ENCODE measurements at regions of chr6 and their contacts with region 1.

Region 1: GRCh38 chr6:29737707-29738630 is 14.7 kb downstream of the HLA-F start:
- DNase-seq: peak; percentile 41 to 74 (median 65)
- ATAC-seq: peak; percentile 94
- H3K4me3 ChIP-seq: no peak overlapping the region
- H3K4me3 Mint-ChIP-seq: no peak overlapping the region
- H3K27ac ChIP-seq: no peak overlapping the region
- H3K27ac Mint-ChIP-seq: peak overlapping the region in 1 of 9 donors; percentile 48
- H3K4me1 ChIP-seq: no peaks in the 10 kb centered on the region
- H3K4me1 Mint-ChIP-seq: peaks cover 11 to 29% (median 15%) of the 10 kb centered on the region in 7 donors
- H3K27me3 ChIP-seq: no peaks in the 10 kb centered on the region
- H3K27me3 Mint-ChIP-seq: no peaks in the 10 kb centered on the region

Region 2: GRCh38 chr6:29705389-29706231 is 32.4 kb before region 1 on chr6:
- CTCF ChIA-PET with region 1: interaction called, 13 read pairs
- POLR2A ChIA-PET with region 1: interaction called, 33 read pairs
- intact Hi-C with region 1: loop called (anchors 1 to 5 kb)
- DNase-seq: peak in 4 of 9 donors; percentile 41 to 60 (median 43)
- ATAC-seq: no peak
- H3K4me3 ChIP-seq: no peak overlapping the region
- H3K4me3 Mint-ChIP-seq: peak overlapping the region in 6 of 10 donors; percentile 20 to 77 (median 42)
- H3K27ac ChIP-seq: peak overlapping the region; percentile 2
- H3K27ac Mint-ChIP-seq: peak overlapping the region in 8 of 9 donors; percentile 16 to 95 (median 82)
- H3K4me1 ChIP-seq: peaks cover 47 to 54% of the 10 kb centered on the region in 2 donors
- H3K4me1 Mint-ChIP-seq: peaks cover 21 to 59% (median 51%) of the 10 kb centered on the region in 7 donors
- H3K27me3 ChIP-seq: no peaks in the 10 kb centered on the region
- H3K27me3 Mint-ChIP-seq: peaks cover 4 to 37% (median 8%) of the 10 kb centered on the region in 5 donors

Region 3: GRCh38 chr6:29723262-29723665 is 14.7 kb before region 1 on chr6 and contains the start of gene HLA-F:
- CTCF ChIA-PET with region 1: interaction called, 12 read pairs
- POLR2A ChIA-PET with region 1: interaction called, 9 read pairs
- intact Hi-C with region 1: no loop called
- DNase-seq: peak; percentile 56 to 87 (median 79)
- ATAC-seq: peak; percentile 91
- H3K4me3 ChIP-seq: peak within 1 kb of the TSS; percentile 98
- H3K4me3 Mint-ChIP-seq: peak within 1 kb of the TSS; percentile 82 to 97 (median 95)
- H3K27ac ChIP-seq: peak within 1 kb of the TSS; percentile 100
- H3K27ac Mint-ChIP-seq: peak within 1 kb of the TSS; percentile 92 to 98 (median 95)
- H3K4me1 ChIP-seq: peaks cover 47 to 48% of the 10 kb centered on the region in 2 donors
- H3K4me1 Mint-ChIP-seq: peaks cover 32 to 63% (median 50%) of the 10 kb centered on the region in 7 donors
- H3K27me3 ChIP-seq: no peaks in the 10 kb centered on the region
- H3K27me3 Mint-ChIP-seq: no peaks in the 10 kb centered on the region
- total RNA-seq, gene HLA-F: 502 to 678 (median 522) TPM

Region 4: DNA sequence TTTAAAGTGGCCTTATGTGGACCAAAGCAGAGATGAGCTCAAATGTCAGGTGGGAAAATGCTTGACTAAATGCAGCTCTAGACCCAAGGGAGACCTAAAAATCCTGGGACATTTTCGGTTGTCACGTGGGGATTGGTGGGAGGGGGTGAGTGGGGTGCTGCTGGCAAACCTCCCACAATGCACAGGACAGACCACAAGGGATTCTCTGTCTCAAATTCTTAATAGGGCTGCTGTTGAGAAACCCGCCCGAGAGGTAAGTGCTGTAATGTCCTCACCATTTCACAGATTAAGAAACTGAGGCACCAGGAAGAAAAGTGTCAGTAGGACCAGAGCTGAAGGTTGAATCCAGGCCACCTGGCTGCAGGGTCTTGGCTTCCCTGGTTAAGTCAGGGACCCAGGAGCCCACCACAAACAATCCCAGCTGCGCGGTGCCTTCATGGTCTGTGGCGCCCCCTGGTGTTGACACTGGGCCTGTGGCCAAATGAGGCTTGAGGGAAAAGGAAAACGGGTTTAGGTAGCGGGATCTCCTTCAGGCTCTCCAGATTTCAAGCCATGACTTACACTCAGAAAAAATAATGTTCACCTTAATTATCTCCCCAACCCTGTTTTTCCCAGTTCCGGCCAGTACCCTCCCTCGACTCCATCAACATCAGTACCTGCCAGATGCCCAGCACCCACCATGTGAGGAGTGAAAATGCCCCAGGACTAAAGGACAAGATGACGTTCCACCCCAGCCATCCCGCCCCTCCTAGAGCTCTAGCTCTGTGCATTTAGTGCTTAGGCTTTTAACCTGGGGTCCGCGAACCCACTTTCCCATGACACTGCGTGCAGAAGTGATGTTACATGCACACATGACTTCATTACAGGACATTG is 96.8 kb after region 1 on chr6:
- CTCF ChIA-PET with region 1: interaction called, 34 read pairs
- POLR2A ChIA-PET with region 1: interaction called, 3 read pairs
- intact Hi-C with region 1: loop called (anchors 1 kb)
- DNase-seq: peak in 8 of 9 donors; percentile 34 to 60 (median 47)
- ATAC-seq: peak; percentile 77
- H3K4me3 ChIP-seq: no peak overlapping the region
- H3K4me3 Mint-ChIP-seq: no peak overlapping the region
- H3K27ac ChIP-seq: no peak overlapping the region
- H3K27ac Mint-ChIP-seq: no peak overlapping the region
- H3K4me1 ChIP-seq: no peaks in the 10 kb centered on the region
- H3K4me1 Mint-ChIP-seq: peaks cover 0 to 11% (median 0%) of the 10 kb centered on the region in 7 donors
- H3K27me3 ChIP-seq: no peaks in the 10 kb centered on the region
- H3K27me3 Mint-ChIP-seq: peaks cover 46 to 79% (median 67%) of the 10 kb centered on the region in 5 donors

Region 5: GRCh38 chr6:30013291-30013922 is 275.4 kb after region 1 on chr6:
- CTCF ChIA-PET with region 1: no interaction called
- POLR2A ChIA-PET with region 1: no interaction called
- intact Hi-C with region 1: loop called in 1 of 2 experiments (anchors 1 kb)
- DNase-seq: peak in 8 of 9 donors; percentile 13 to 47 (median 32)
- ATAC-seq: peak; percentile 57
- H3K4me3 ChIP-seq: no peak overlapping the region
- H3K4me3 Mint-ChIP-seq: no peak overlapping the region
- H3K27ac ChIP-seq: no peak overlapping the region
- H3K27ac Mint-ChIP-seq: peak overlapping the region in 1 of 9 donors; percentile 12
- H3K4me1 ChIP-seq: no peaks in the 10 kb centered on the region
- H3K4me1 Mint-ChIP-seq: peaks cover 0 to 4% (median 0%) of the 10 kb centered on the region in 7 donors
- H3K27me3 ChIP-seq: peaks cover 0 to 3% of the 10 kb centered on the region in 2 donors
- H3K27me3 Mint-ChIP-seq: peaks cover 4 to 34% (median 15%) of the 10 kb centered on the region in 5 donors

Region 6: DNA sequence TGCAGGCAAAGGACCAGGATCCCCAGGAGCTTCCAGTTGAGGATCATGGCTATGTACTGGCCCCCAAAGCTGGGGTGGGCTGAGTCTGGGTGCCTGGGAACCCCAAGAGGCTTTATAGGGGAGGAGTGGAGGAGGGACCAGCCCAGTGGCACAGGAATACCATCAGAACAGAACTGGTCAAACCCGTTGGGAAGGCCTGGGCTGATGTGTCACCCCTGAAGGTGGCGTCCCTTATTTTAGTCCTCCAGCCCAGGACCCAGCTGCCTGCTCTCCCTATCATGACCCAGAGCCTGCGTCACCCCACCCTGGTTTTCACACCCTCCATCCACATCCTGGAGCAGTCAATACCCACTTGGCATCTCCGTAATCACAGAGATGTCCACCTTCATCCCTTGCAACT is 1401.0 kb after region 1 on chr6 and contains the start of gene PSORS1C2:
- CTCF ChIA-PET with region 1: no interaction called
- POLR2A ChIA-PET with region 1: no interaction called
- intact Hi-C with region 1: no loop called
- DNase-seq: no peak
- ATAC-seq: no peak
- H3K4me3 ChIP-seq: no peak within 1 kb of the TSS
- H3K4me3 Mint-ChIP-seq: peak within 1 kb of the TSS in 4 of 10 donors; percentile 11 to 79 (median 76)
- H3K27ac ChIP-seq: no peak within 1 kb of the TSS
- H3K27ac Mint-ChIP-seq: peak within 1 kb of the TSS in 3 of 9 donors; percentile 70 to 88 (median 71)
- H3K4me1 ChIP-seq: peaks cover 0 to 5% of the 10 kb centered on the region in 2 donors
- H3K4me1 Mint-ChIP-seq: peaks cover 4 to 8% (median 7%) of the 10 kb centered on the region in 7 donors
- H3K27me3 ChIP-seq: no peaks in the 10 kb centered on the region
- H3K27me3 Mint-ChIP-seq: peaks cover 0 to 3% (median 0%) of the 10 kb centered on the region in 5 donors
- total RNA-seq, gene PSORS1C2: not detected

Measured in naive thymus-derived CD4-positive, alpha-beta T cell (primary cell).